Breast epithelium (tissue), 4 donors: ENCODE measurements at regions of chr5 and their contacts with region 1.

Region 1: GRCh38 chr5:142767921-142768320 is 2.3 kb upstream of the ARHGAP26 start:
- DNase-seq: no peak
- H3K4me3 ChIP-seq: no peak overlapping the region
- H3K27ac ChIP-seq: no peak overlapping the region
- H3K4me1 ChIP-seq: peaks cover 0 to 4% of the 10 kb centered on the region in 2 donors
- H3K27me3 ChIP-seq: no peaks in the 10 kb centered on the region
- CTCF ChIP-seq: no peak
- POLR2A ChIP-seq: no peak

Region 2: DNA sequence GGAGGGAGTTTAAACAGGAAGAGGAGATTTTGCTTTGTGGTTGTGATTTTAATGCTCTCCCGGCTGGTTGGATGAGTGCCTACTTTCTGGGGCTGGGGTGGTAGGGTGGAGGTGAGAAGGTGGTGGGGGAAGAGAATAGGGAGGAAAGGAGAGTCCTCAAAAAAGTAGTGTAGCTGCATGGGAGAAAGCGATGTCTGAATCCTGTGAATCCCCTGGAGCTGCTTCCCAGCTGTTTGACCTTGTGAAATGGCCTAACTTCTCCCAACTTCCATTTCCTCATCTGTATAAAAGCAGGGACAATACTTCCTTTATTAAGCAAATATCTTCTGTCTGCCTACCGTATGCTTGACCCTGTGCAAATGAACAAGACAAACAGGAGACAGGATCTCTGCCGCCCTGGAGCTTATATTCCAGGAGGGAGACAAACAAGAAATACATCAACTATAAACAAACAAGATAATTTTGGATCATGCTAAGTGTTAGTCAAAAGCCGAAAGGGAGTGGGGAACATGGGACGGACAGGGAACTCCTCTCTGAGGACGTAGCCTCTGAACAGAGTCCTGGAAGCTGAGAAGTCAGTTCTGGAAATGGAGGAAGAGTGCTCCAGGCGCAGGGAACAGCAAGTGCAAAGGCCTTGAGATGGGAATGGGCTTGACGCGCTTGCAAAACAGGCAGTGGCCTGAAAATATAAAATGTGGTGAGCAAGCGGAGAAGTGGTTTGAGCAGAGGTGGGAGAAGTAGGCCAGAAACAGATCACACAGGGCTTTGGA is 546.6 kb before region 1 on chr5:
- intact Hi-C with region 1: no loop called
- DNase-seq: no peak
- H3K4me3 ChIP-seq: no peak overlapping the region
- H3K27ac ChIP-seq: peak overlapping the region; percentile 54 to 66
- H3K4me1 ChIP-seq: peaks cover 0 to 8% of the 10 kb centered on the region in 2 donors
- H3K27me3 ChIP-seq: no peaks in the 10 kb centered on the region
- CTCF ChIP-seq: no peak
- POLR2A ChIP-seq: no peak

Region 3: GRCh38 chr5:142753116-142753631 is 14.7 kb before region 1 on chr5:
- intact Hi-C with region 1: loop called (anchors 1 kb)
- DNase-seq: peak; percentile 73 to 89
- H3K4me3 ChIP-seq: peak overlapping the region in 1 of 3 donors; percentile 0
- H3K27ac ChIP-seq: peak overlapping the region; percentile 86 to 88
- H3K4me1 ChIP-seq: peaks cover 0 to 20% of the 10 kb centered on the region in 2 donors
- H3K27me3 ChIP-seq: no peaks in the 10 kb centered on the region
- CTCF ChIP-seq: no peak
- POLR2A ChIP-seq: no peak

Region 4: DNA sequence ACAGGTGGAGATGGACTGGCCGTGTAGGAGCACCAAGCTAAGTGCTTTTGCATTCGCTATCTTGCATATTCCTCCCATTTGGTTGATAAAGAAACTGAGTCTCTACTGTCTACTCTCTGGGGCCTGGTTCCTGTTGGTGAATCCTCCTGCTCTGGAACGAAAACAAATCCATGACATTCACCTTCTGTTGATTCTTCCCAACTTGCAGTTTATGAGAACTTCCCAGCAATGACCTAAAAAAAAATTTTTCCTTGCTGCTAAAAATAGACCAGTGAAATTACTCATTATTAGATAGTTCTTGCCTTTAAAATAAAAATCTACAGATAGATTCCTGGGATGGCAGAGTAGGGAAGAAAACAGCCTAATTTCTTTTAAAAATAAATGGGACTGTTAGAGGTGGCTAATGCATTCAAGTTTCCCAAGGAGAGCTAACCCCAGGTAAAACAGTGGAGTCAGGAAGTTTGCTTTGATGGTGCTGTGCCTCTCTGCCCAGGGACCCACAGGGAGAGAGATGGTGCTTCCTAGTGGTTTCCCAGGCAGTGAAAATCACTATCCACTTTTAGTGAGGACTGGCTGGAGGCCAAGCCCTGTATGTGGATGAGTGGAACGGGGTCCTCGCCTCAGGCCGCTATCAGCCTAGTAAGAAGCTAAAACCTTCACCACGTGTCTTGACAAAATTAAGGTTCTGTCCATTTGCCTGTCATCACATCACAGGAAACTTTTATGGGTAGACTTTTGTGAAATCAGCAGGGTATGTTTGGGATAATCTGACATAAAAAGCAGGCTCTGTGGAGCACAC is 703.9 kb after region 1 on chr5:
- intact Hi-C with region 1: no loop called
- DNase-seq: no peak
- H3K4me3 ChIP-seq: no peak overlapping the region
- H3K27ac ChIP-seq: no peak overlapping the region
- H3K4me1 ChIP-seq: no peaks in the 10 kb centered on the region
- H3K27me3 ChIP-seq: no peaks in the 10 kb centered on the region
- CTCF ChIP-seq: no peak
- POLR2A ChIP-seq: no peak